ENCODE measurements at regions of chr2 and their contacts with region 1.

Region 1: GRCh38 chr2:85826990-85827878 is 61.6 kb downstream of the ST3GAL5 start:
- DNase-seq: peak; percentile 88
- ATAC-seq: peak; percentile 99
- H3K4me3 ChIP-seq: peak overlapping the region in 2 of 5 experiments; percentile 16 to 18
- H3K4me3 Mint-ChIP-seq: peak overlapping the region; percentile 59
- H3K27ac ChIP-seq: no peak overlapping the region
- H3K27ac Mint-ChIP-seq: peak overlapping the region; percentile 54
- H3K4me1 ChIP-seq: peaks cover 5 to 15% of the 10 kb centered on the region in 2 donors
- H3K4me1 Mint-ChIP-seq: peaks cover 25% of the 10 kb centered on the region
- H3K27me3 ChIP-seq: no peaks in the 10 kb centered on the region
- H3K27me3 Mint-ChIP-seq: peaks cover 4% of the 10 kb centered on the region
- CTCF ChIP-seq: peak; percentile 88

Region 2: GRCh38 chr2:85694052-85695025 is 132.9 kb before region 1 on chr2 and contains the start of gene GNLY:
- CTCF ChIA-PET with region 1: no interaction called
- POLR2A ChIA-PET with region 1: no interaction called
- intact Hi-C with region 1: no loop called
- DNase-seq: no peak
- ATAC-seq: no peak
- H3K4me3 ChIP-seq: no peak within 1 kb of the TSS
- H3K4me3 Mint-ChIP-seq: no peak within 1 kb of the TSS
- H3K27ac ChIP-seq: no peak within 1 kb of the TSS
- H3K27ac Mint-ChIP-seq: no peak within 1 kb of the TSS
- H3K4me1 ChIP-seq: no peaks in the 10 kb centered on the region
- H3K4me1 Mint-ChIP-seq: peaks cover 4% of the 10 kb centered on the region
- H3K27me3 ChIP-seq: no peaks in the 10 kb centered on the region
- H3K27me3 Mint-ChIP-seq: peaks cover 5% of the 10 kb centered on the region
- CTCF ChIP-seq: no peak
- total RNA-seq, gene GNLY: 4.2 and 4.3 TPM in 2 replicates

Region 3: DNA sequence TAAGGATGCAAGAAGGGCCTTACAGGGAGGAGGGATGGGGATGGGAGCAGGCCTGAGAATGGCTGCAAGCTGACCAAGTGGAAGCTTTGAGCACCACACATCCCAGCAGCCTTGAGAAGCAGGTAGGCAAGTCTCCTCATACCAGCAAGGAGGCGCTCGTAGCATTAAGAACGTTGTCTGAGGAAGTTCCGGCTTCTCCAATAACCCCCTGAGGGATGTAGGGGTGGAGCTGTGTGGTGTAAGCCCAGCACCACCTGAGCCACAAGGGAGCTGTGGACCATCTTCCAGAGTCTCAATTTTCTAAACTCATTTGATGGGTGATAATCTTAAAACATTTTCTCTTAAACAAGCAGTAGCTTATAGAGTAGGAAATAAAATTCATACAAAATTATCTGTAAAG is 10.9 kb after region 1 on chr2:
- CTCF ChIA-PET with region 1: interaction called, 17 read pairs
- POLR2A ChIA-PET with region 1: no interaction called
- intact Hi-C with region 1: no loop called
- DNase-seq: no peak
- ATAC-seq: no peak
- H3K4me3 ChIP-seq: no peak overlapping the region
- H3K4me3 Mint-ChIP-seq: no peak overlapping the region
- H3K27ac ChIP-seq: peak overlapping the region in 1 of 2 donors; percentile 16
- H3K27ac Mint-ChIP-seq: peak overlapping the region; percentile 24
- H3K4me1 ChIP-seq: peaks cover 3 to 10% of the 10 kb centered on the region in 2 donors
- H3K4me1 Mint-ChIP-seq: peaks cover 28% of the 10 kb centered on the region
- H3K27me3 ChIP-seq: no peaks in the 10 kb centered on the region
- H3K27me3 Mint-ChIP-seq: no peaks in the 10 kb centered on the region
- CTCF ChIP-seq: no peak

Region 4: GRCh38 chr2:85852937-85853498 is 25.8 kb after region 1 on chr2:
- CTCF ChIA-PET with region 1: interaction called, 52 read pairs
- POLR2A ChIA-PET with region 1: interaction called, 7 read pairs
- intact Hi-C with region 1: loop called (anchors 1 kb)
- DNase-seq: peak; percentile 81
- ATAC-seq: peak; percentile 82
- H3K4me3 ChIP-seq: peak overlapping the region; percentile 29 to 56 (median 38)
- H3K4me3 Mint-ChIP-seq: peak overlapping the region; percentile 87
- H3K27ac ChIP-seq: peak overlapping the region; percentile 95 to 100
- H3K27ac Mint-ChIP-seq: peak overlapping the region; percentile 99
- H3K4me1 ChIP-seq: peaks cover 49 to 53% of the 10 kb centered on the region in 2 donors
- H3K4me1 Mint-ChIP-seq: peaks cover 70% of the 10 kb centered on the region
- H3K27me3 ChIP-seq: no peaks in the 10 kb centered on the region
- H3K27me3 Mint-ChIP-seq: no peaks in the 10 kb centered on the region
- CTCF ChIP-seq: no peak

Region 5: GRCh38 chr2:85999061-85999831 is 172.0 kb after region 1 on chr2:
- CTCF ChIA-PET with region 1: interaction called, 19 read pairs
- POLR2A ChIA-PET with region 1: interaction called, 4 read pairs
- intact Hi-C with region 1: loop called (anchors 1 kb)
- DNase-seq: peak; percentile 64
- ATAC-seq: peak; percentile 73
- H3K4me3 ChIP-seq: peak overlapping the region in 3 of 5 experiments; percentile 16 to 52 (median 27)
- H3K4me3 Mint-ChIP-seq: peak overlapping the region; percentile 59
- H3K27ac ChIP-seq: peak overlapping the region; percentile 79 to 87
- H3K27ac Mint-ChIP-seq: peak overlapping the region; percentile 93
- H3K4me1 ChIP-seq: peaks cover 73 to 74% of the 10 kb centered on the region in 2 donors
- H3K4me1 Mint-ChIP-seq: peaks cover 78% of the 10 kb centered on the region
- H3K27me3 ChIP-seq: no peaks in the 10 kb centered on the region
- H3K27me3 Mint-ChIP-seq: no peaks in the 10 kb centered on the region
- CTCF ChIP-seq: no peak

Region 6: DNA sequence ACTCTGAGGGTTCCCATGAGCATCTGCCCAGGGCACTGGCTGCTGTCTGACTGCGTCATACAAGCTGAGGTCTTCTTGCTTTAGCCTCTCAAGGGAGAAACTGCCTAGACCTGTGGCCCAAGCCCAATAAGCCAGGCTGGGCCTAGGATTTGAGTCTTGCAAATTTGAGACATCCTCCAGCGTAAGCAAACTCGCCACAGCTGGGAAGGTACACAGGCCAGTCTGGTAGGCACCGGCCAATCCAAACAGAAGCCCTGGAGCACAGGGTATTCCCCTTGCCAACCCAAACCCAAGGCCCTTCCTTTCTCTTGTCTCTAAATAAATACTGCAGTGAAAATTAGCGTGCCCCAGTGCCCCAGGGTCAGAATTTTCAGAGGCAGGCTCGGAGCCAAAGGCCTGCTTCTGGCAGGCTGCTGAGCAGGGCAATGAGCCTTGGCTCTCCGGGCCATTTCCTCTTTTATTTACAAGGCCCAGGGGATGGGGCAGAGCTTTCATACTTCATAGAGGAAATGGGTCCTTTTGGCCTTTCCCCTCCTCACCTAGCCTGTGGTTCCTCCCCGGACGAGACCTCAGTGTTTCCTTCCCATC is 245.1 kb after region 1 on chr2:
- CTCF ChIA-PET with region 1: interaction called, 528 read pairs
- POLR2A ChIA-PET with region 1: no interaction called
- intact Hi-C with region 1: no loop called
- DNase-seq: peak; percentile 81
- ATAC-seq: peak; percentile 89
- H3K4me3 ChIP-seq: no peak overlapping the region
- H3K4me3 Mint-ChIP-seq: peak overlapping the region; percentile 49
- H3K27ac ChIP-seq: peak overlapping the region; percentile 79
- H3K27ac Mint-ChIP-seq: peak overlapping the region; percentile 94
- H3K4me1 ChIP-seq: peaks cover 20 to 34% of the 10 kb centered on the region in 2 donors
- H3K4me1 Mint-ChIP-seq: peaks cover 30% of the 10 kb centered on the region
- H3K27me3 ChIP-seq: no peaks in the 10 kb centered on the region
- H3K27me3 Mint-ChIP-seq: no peaks in the 10 kb centered on the region
- CTCF ChIP-seq: no peak

Region 7: DNA sequence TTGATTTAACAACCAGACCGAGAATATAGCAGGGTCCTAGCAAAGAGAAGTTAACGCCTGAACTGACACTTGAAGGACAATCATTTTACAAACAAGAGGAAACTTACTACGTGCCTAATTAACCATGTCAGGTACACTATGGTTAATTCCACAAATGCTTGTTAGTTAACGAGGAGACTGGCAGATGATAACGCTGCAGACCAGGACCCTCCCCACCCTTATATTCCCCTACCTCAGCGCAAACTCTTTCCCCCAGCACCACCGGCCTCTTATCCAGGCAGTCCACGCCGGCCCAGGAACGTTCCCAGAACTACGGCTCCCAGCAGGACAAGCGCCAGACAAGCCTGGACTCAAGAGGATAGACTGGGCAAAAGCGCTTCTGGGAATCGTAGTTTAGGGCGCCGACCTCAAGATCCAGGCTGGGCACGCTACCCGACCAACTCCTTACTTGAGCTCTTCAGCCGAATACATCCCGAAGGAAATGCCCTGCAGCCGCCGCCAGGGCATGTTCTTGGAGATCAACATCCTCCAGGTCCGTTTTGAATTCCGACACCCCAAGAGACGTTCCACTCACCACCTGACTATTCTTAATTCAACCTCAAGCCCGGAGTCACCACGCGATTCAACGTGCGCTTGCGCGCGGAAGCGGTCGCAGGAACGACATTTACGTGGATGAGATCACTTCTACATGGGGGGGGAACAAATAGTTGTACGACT is 278.2 kb after region 1 on chr2 and contains the start of gene POLR1A:
- CTCF ChIA-PET with region 1: interaction called, 15 read pairs
- POLR2A ChIA-PET with region 1: interaction called, 3 read pairs
- intact Hi-C with region 1: loop called (anchors 1 kb)
- DNase-seq: peak; percentile 95
- ATAC-seq: peak; percentile 76
- H3K4me3 ChIP-seq: peak within 1 kb of the TSS; percentile 88 to 96 (median 89)
- H3K4me3 Mint-ChIP-seq: peak within 1 kb of the TSS; percentile 93
- H3K27ac ChIP-seq: peak within 1 kb of the TSS; percentile 74 to 92
- H3K27ac Mint-ChIP-seq: peak within 1 kb of the TSS; percentile 95
- H3K4me1 ChIP-seq: peaks cover 16 to 22% of the 10 kb centered on the region in 2 donors
- H3K4me1 Mint-ChIP-seq: peaks cover 50% of the 10 kb centered on the region
- H3K27me3 ChIP-seq: no peaks in the 10 kb centered on the region
- H3K27me3 Mint-ChIP-seq: no peaks in the 10 kb centered on the region
- CTCF ChIP-seq: no peak
- total RNA-seq, gene POLR1A: 32.7 and 36.8 TPM in 2 replicates